A673 (cell line): ENCODE measurements at regions of chr18 and their contacts with region 1.

Region 1: GRCh38 chr18:65091744-65092329 is 659.0 kb upstream of the CDH7 start:
- DNase-seq: peak; percentile 63
- H3K4me3 ChIP-seq: no peak overlapping the region
- H3K27ac ChIP-seq: no peak overlapping the region
- H3K4me1 ChIP-seq: no peaks in the 10 kb centered on the region
- H3K27me3 ChIP-seq: no peaks in the 10 kb centered on the region
- CTCF ChIP-seq: peak; percentile 74

Region 2: DNA sequence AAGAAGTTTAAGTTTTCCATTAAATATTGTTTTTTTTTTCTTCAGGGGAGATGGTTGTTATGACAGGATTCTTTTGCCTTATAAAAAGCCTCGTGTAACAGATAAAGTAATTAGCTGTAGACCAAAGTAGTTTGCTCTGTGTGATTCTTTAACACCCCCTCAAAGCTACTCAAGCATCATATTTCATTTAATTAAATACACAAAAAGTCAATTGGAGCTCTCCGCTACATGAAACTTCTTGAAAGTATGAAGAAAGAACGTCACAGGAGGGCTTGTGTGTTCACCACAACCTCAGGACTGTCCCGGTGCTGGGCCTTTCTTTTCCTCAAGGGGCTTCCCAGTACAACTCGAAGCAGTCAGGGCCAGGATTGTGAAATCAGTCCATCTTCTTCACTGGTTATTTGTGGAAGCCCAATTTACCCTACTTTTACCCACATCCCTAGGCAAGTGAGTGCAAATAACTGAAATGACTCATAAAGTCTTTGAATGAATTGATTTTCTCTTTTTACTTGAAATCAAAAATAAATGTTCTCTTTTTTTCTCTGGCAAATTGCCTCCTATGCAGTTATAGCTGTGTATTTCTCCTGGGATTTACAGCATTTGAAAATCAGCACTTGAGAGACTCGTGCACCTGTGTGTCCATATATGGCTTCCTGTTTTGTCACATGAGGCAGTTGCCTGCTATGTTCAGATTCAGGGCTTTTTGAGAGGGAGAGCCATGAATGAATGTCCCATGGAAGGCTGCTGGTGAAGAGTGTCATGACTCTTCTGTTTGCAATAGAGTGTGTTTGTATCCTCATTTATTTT is 991.5 kb before region 1 on chr18:
- CTCF ChIA-PET with region 1: no interaction called
- POLR2A ChIA-PET with region 1: no interaction called
- intact Hi-C with region 1: loop called (anchors 10 kb)
- DNase-seq: peak; percentile 36
- H3K4me3 ChIP-seq: no peak overlapping the region
- H3K27ac ChIP-seq: no peak overlapping the region
- H3K4me1 ChIP-seq: peaks cover 6% of the 10 kb centered on the region
- H3K27me3 ChIP-seq: no peaks in the 10 kb centered on the region
- CTCF ChIP-seq: no peak